ENCODE measurements at regions of chr21 and their contacts with region 1.

Region 1: GRCh38 chr21:42272984-42273600 is 42.1 kb downstream of the TFF3 start:
- DNase-seq: no peak
- H3K4me3 Mint-ChIP-seq: no peak overlapping the region
- H3K27ac Mint-ChIP-seq: no peak overlapping the region
- H3K4me1 Mint-ChIP-seq: no peaks in the 10 kb centered on the region
- H3K27me3 Mint-ChIP-seq: no peaks in the 10 kb centered on the region
- CTCF ChIP-seq: no peak

Region 2: GRCh38 chr21:42258153-42258884 is 14.8 kb before region 1 on chr21:
- CTCF ChIA-PET with region 1: interaction called, 13 read pairs
- POLR2A ChIA-PET with region 1: no interaction called
- intact Hi-C with region 1: no loop called
- DNase-seq: peak; percentile 67
- H3K4me3 Mint-ChIP-seq: no peak overlapping the region
- H3K27ac Mint-ChIP-seq: no peak overlapping the region
- H3K4me1 Mint-ChIP-seq: peaks cover 14% of the 10 kb centered on the region
- H3K27me3 Mint-ChIP-seq: no peaks in the 10 kb centered on the region
- CTCF ChIP-seq: peak; percentile 87

Measured in MCF 10A (cell line).